Activated B cell treated with CpG ODN at 0.5 μM for 24 hours (primary cell): ENCODE measurements at regions of chr17 and their contacts with region 1.

Region 1: GRCh38 chr17:38415250-38416194 is 12.7 kb upstream of the ARHGAP23 start:
- DNase-seq: no peak
- ATAC-seq: peak; percentile 26
- H3K4me3 Mint-ChIP-seq: no peak overlapping the region
- H3K27ac Mint-ChIP-seq: no peak overlapping the region
- H3K4me1 Mint-ChIP-seq: peaks cover 17% of the 10 kb centered on the region
- H3K27me3 Mint-ChIP-seq: peaks cover 27% of the 10 kb centered on the region
- CTCF ChIP-seq: no peak

Region 2: GRCh38 chr17:38403491-38403890 is 12.0 kb before region 1 on chr17:
- CTCF ChIA-PET with region 1: no interaction called
- POLR2A ChIA-PET with region 1: interaction called, 14 read pairs
- intact Hi-C with region 1: no loop called
- DNase-seq: no peak
- ATAC-seq: no peak
- H3K4me3 Mint-ChIP-seq: no peak overlapping the region
- H3K27ac Mint-ChIP-seq: no peak overlapping the region
- H3K4me1 Mint-ChIP-seq: no peaks in the 10 kb centered on the region
- H3K27me3 Mint-ChIP-seq: no peaks in the 10 kb centered on the region
- CTCF ChIP-seq: no peak

Region 3: GRCh38 chr17:38476544-38476943 is 61.0 kb after region 1 on chr17:
- CTCF ChIA-PET with region 1: no interaction called
- POLR2A ChIA-PET with region 1: no interaction called
- intact Hi-C with region 1: no loop called
- DNase-seq: no peak
- ATAC-seq: no peak
- H3K4me3 Mint-ChIP-seq: no peak overlapping the region
- H3K27ac Mint-ChIP-seq: no peak overlapping the region
- H3K4me1 Mint-ChIP-seq: no peaks in the 10 kb centered on the region
- H3K27me3 Mint-ChIP-seq: no peaks in the 10 kb centered on the region
- CTCF ChIP-seq: no peak